Left cardiac atrium (tissue), 4 donors: ENCODE measurements at regions of chr11 and their contacts with region 1.

Region 1: GRCh38 chr11:66835768-66836405 is 7.4 kb upstream of the RCE1 start:
- DNase-seq: no peak
- ATAC-seq: no peak

Region 2: GRCh38 chr11:66408488-66409214 is 427.2 kb before region 1 on chr11:
- intact Hi-C with region 1: loop called in 1 of 2 experiments (anchors 5 kb)
- DNase-seq: peak; percentile 91
- ATAC-seq: peak; percentile 96 to 97

Region 3: GRCh38 chr11:66579017-66579606 is 256.8 kb before region 1 on chr11:
- intact Hi-C with region 1: loop called (anchors 10 kb)
- DNase-seq: peak; percentile 88
- ATAC-seq: peak; percentile 92 to 96

Region 4: GRCh38 chr11:66638177-66639065 is 197.5 kb before region 1 on chr11 and contains the start of gene RBM4:
- intact Hi-C with region 1: no loop called
- DNase-seq: peak; percentile 97
- ATAC-seq: peak; percentile 97 to 98
- total RNA-seq, gene RBM4: 63.6 to 76.7 TPM

Region 5: GRCh38 chr11:66694732-66695207 is 141.1 kb before region 1 on chr11:
- intact Hi-C with region 1: loop called (anchors 1 to 2 kb)
- DNase-seq: peak; percentile 85
- ATAC-seq: peak; percentile 87 to 91